ENCODE measurements at regions of chr7 and their contacts with region 1.

Region 1: DNA sequence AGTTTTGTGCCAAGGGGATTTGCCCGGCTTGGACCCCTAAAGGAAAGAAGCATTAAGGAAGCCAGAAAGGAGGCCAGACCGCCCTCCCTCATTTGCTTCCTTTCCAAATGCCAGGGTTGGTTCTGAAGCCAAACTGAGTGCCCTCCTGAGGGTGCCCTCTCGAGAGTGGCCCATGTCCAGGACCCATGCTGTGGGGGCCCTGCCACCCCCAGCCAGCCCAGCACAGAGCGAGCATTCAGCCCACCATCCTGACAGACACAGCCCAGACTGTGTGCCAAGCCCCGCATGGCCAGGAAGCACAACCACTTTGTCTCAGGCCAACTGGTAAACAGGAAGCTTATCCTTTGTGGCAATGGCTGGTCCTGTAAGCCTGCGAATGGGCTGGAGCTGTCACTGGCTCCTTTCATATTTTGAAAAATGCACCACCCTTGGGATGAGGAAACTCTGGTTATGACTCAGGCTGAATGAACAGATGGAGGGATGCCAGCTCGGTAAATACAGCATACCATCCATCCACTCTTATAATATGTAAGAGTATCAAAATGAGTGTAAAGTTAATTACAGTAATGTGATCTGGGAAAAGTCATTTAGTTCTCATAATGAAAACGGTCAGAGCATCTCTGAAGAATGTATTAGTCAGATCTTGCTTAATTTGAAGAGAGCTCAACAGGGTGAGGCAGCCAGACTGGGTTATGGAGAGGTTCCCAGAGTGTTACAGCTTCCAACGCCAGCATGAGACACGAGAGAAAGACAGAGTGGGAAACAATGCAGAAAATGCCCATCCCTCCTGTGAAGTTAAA is 65.0 kb downstream of the STK17A start:
- DNase-seq: no peak
- H3K4me3 Mint-ChIP-seq: peak overlapping the region; percentile 75
- H3K27ac Mint-ChIP-seq: peak overlapping the region; percentile 98
- H3K4me1 Mint-ChIP-seq: peaks cover 95% of the 10 kb centered on the region
- H3K27me3 Mint-ChIP-seq: no peaks in the 10 kb centered on the region

Region 2: GRCh38 chr7:43220250-43220649 is 427.6 kb before region 1 on chr7:
- intact Hi-C with region 1: no loop called
- DNase-seq: no peak
- H3K4me3 Mint-ChIP-seq: no peak overlapping the region
- H3K27ac Mint-ChIP-seq: no peak overlapping the region
- H3K4me1 Mint-ChIP-seq: no peaks in the 10 kb centered on the region
- H3K27me3 Mint-ChIP-seq: no peaks in the 10 kb centered on the region

Region 3: GRCh38 chr7:43590862-43591550 is 56.9 kb before region 1 on chr7:
- intact Hi-C with region 1: loop called (anchors 1 kb)
- DNase-seq: peak; percentile 33
- H3K4me3 Mint-ChIP-seq: peak overlapping the region; percentile 46
- H3K27ac Mint-ChIP-seq: peak overlapping the region; percentile 70
- H3K4me1 Mint-ChIP-seq: peaks cover 85% of the 10 kb centered on the region
- H3K27me3 Mint-ChIP-seq: no peaks in the 10 kb centered on the region

Region 4: GRCh38 chr7:43621729-43622448 is 26.0 kb before region 1 on chr7:
- intact Hi-C with region 1: loop called (anchors 1 kb)
- DNase-seq: no peak
- H3K4me3 Mint-ChIP-seq: peak overlapping the region; percentile 6
- H3K27ac Mint-ChIP-seq: peak overlapping the region; percentile 69
- H3K4me1 Mint-ChIP-seq: peaks cover 55% of the 10 kb centered on the region
- H3K27me3 Mint-ChIP-seq: no peaks in the 10 kb centered on the region

Region 5: DNA sequence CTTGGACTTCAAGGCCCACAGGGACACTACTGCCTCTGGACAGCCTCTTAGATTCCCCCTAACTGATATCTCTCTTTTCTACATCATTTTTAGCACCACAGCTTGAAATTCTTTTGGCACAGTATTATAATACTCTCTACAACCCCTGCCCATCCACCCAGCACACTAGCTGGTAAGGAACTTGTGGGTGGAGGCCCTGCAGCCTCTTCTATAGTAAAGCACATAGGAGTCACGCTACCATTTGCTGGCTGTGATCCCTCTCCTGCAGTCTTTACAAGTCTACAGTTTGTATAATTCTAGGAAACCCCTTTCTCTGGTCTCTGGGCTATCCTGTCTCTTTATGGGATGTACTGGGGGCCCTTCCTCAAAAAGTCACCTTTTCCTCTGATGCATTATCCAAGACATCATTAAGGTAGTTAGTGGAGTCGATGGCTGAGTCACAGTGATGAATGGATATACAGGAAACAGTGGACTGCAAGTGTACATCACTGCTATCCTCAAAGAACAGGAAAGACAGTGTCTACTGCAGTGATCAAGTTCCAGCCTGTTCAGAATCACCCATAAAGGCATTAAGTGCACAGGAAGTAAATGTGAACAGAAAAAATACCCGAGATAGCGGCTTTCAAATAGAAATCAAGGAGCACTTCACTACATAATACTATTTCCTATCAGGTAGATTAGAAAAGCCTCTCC is 10.6 kb before region 1 on chr7:
- intact Hi-C with region 1: loop called (anchors 1 kb)
- DNase-seq: no peak
- H3K4me3 Mint-ChIP-seq: peak overlapping the region; percentile 17
- H3K27ac Mint-ChIP-seq: peak overlapping the region; percentile 87
- H3K4me1 Mint-ChIP-seq: peaks cover 69% of the 10 kb centered on the region
- H3K27me3 Mint-ChIP-seq: no peaks in the 10 kb centered on the region

Region 6: DNA sequence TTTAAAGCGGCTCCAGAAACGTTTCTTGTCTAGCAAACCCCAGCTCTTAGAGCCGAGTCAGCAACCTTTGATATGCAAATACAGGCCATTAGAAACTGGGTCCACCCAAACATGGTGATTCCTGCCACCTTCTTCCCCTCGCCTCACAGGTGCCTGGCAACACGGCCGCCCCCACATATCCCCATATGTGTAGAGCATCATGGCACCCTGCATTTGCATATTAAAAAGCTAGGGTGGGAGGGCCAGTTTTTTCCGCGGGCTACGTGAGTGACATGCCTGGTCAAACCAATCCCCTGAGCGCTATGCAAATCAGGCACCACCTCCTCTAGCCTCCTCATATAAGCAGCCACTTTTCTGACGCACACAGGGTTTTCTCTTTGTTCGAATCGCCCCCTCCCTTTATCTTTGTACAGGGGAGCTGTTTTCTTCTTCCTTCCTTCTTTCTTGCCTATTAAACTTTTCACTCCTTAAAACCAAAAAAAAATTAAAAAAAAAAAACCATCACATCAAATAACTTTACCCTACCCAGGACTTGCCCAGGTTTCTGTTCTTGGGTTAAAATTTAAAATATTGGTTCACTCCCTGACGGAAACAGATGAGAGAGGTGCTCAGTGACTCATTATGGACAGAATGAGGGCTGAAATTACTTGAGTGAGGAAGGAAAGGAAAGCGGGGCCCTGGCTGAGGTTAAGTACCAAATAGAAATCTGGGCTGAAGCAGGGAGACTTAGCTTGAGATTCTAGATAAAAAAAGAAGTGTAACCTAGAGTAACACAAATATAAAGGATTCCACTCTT is 21.6 kb after region 1 on chr7:
- intact Hi-C with region 1: loop called (anchors 1 kb)
- DNase-seq: peak; percentile 29
- H3K4me3 Mint-ChIP-seq: peak overlapping the region; percentile 65
- H3K27ac Mint-ChIP-seq: peak overlapping the region; percentile 91
- H3K4me1 Mint-ChIP-seq: peaks cover 51% of the 10 kb centered on the region
- H3K27me3 Mint-ChIP-seq: no peaks in the 10 kb centered on the region

Region 7: GRCh38 chr7:43700059-43700501 is 52.2 kb after region 1 on chr7:
- intact Hi-C with region 1: loop called (anchors 1 kb)
- DNase-seq: no peak
- H3K4me3 Mint-ChIP-seq: no peak overlapping the region
- H3K27ac Mint-ChIP-seq: no peak overlapping the region
- H3K4me1 Mint-ChIP-seq: peaks cover 65% of the 10 kb centered on the region
- H3K27me3 Mint-ChIP-seq: no peaks in the 10 kb centered on the region

Region 8: GRCh38 chr7:43764039-43764761 is 116.3 kb after region 1 on chr7:
- intact Hi-C with region 1: no loop called
- DNase-seq: no peak
- H3K4me3 Mint-ChIP-seq: no peak overlapping the region
- H3K27ac Mint-ChIP-seq: no peak overlapping the region
- H3K4me1 Mint-ChIP-seq: peaks cover 29% of the 10 kb centered on the region
- H3K27me3 Mint-ChIP-seq: no peaks in the 10 kb centered on the region